ENCODE measurements at regions of chr11 and their contacts with region 1.

Region 1: GRCh38 chr11:3841426-3842350 is 929 bp upstream of the RHOG start:
- DNase-seq: peak; percentile 88
- CTCF ChIP-seq: peak; percentile 83

Region 2: DNA sequence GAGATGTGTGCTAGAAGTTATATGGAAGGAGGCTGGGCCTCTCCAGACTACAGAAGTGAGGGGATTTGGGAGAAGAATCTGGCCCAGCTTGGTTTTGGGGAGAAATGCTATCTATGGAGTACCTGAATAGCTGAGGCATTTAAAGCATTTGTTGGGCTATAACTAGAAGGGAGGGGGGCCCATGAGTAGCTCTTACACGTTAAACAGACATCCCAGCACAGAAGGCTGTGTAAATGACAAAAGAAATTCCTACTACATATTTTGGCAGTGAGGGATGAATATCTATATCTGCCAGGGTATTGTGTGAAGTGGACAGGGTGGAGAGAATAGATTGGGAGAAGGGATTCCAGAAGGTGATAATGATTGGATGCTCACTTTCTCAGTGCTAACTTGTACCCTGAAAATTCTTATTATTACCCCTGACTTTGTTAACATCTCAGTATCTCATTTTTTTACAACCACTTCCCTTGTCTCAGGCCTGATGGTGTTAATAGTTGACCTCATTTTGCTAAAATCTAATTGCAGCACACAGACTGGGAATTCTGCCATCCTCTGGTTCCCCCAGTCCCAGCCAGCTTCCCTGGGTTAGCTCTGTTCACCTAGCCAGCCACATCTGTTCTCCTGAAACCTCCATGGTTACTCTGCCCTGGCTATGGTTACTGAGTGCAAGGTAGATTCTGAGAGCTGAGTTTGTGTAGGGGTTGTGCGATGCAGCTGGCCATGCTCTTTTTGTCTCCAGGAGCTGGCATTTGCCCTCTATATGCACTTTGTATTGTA is 224.1 kb after region 1 on chr11:
- in situ Hi-C with region 1: loop called (anchors 10 kb)
- DNase-seq: no peak
- CTCF ChIP-seq: no peak